ENCODE measurements at regions of chr5 and their contacts with region 1.

Region 1: DNA sequence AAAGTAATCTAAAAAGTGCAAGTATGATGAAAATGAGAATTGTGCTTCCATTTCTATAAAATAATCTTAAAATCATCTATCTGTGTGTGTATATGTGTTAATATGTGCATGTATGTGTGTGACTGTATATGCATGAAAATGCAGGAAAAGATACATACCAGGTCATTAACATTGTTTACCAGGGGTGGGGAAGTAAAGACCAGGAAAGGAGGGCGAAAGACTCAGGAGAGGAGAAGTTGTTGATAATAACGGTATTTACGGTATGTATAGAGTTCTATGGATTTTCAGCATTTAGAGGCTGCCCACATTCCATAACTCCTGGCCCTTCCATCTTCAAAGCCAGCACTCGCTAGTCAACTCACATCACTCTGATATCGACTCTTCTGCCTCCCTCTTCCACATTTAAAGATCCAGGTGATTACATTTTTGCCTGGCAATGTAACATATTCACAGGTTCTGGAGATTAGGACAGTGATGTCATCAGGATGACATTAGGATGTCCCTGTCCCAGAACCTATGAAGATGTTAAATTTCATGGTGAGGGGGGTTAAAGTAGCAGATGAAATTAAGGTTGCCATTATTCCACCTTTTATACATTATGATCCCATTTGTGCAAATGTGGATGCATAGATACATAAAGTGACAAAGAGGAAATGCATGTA is 110.9 kb upstream of the SPDL1 start:
- DNase-seq: no peak
- ATAC-seq: no peak
- H3K4me3 ChIP-seq: no peak overlapping the region
- H3K27ac ChIP-seq: no peak overlapping the region
- H3K4me1 ChIP-seq: no peaks in the 10 kb centered on the region
- H3K27me3 ChIP-seq: peaks cover 0 to 3% of the 10 kb centered on the region in 2 experiments; a peak in 1 of 5 replicates
- CTCF ChIP-seq: no peak
- EP300 ChIP-seq: no peak
- POLR2A ChIP-seq: no peak
- RAD21 ChIP-seq: no peak

Region 2: GRCh38 chr5:169499990-169500505 is 27.4 kb after region 1 on chr5:
- CTCF ChIA-PET with region 1: no interaction called
- POLR2A ChIA-PET with region 1: no interaction called
- in situ Hi-C with region 1: no loop called
- intact Hi-C with region 1: loop called (anchors 2 kb)
- DNase-seq: no peak
- ATAC-seq: no peak
- H3K4me3 ChIP-seq: no peak overlapping the region
- H3K27ac ChIP-seq: no peak overlapping the region
- H3K4me1 ChIP-seq: no peaks in the 10 kb centered on the region
- H3K27me3 ChIP-seq: no peaks in the 10 kb centered on the region
- CTCF ChIP-seq: no peak
- EP300 ChIP-seq: no peak
- POLR2A ChIP-seq: no peak
- RAD21 ChIP-seq: no peak